ENCODE measurements at regions of chr10 and their contacts with region 1.

Region 1: GRCh38 chr10:21634599-21635365 is 100.8 kb downstream of the MLLT10 start:
- DNase-seq: no peak
- H3K4me3 ChIP-seq: no peak overlapping the region
- H3K27ac ChIP-seq: no peak overlapping the region
- H3K4me1 ChIP-seq: no peaks in the 10 kb centered on the region
- CTCF ChIP-seq: no peak

Region 2: DNA sequence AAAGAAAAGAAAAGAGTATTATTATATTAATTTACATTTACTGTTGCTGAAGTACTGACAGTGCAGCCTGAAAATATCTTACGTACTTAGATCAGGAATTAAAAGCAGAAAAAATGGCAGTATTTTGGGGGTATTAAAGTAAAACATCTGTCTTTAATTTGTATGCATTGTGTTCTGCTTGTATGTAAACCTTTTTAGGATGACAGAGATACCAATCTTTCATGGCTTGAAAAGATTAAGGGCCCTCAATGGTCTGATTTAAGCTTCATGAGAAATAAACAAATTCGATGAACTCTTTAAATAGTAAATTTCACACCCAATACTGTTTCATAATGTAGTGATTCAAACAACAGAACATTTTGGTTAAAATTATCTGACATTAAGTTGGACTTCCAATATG is 15.6 kb after region 1 on chr10:
- CTCF ChIA-PET with region 1: no interaction called
- POLR2A ChIA-PET with region 1: interaction called, 12 read pairs
- intact Hi-C with region 1: no loop called
- DNase-seq: no peak
- H3K4me3 ChIP-seq: no peak overlapping the region
- H3K27ac ChIP-seq: no peak overlapping the region
- H3K4me1 ChIP-seq: no peaks in the 10 kb centered on the region
- CTCF ChIP-seq: no peak